Activated CD4-positive, alpha-beta memory T cell treated with anti-CD3 and anti-CD28 coated beads for 36 hours (primary cell): ENCODE measurements at regions of chr14 and their contacts with region 1.

Region 1: GRCh38 chr14:20624495-20625070 is 16.9 kb downstream of the OR6S1 start:
- DNase-seq: peak; percentile 64
- H3K4me3 Mint-ChIP-seq: peak overlapping the region; percentile 75
- H3K27ac Mint-ChIP-seq: peak overlapping the region; percentile 81
- H3K4me1 Mint-ChIP-seq: peaks cover 55% of the 10 kb centered on the region
- H3K27me3 Mint-ChIP-seq: peaks cover 45% of the 10 kb centered on the region

Region 2: GRCh38 chr14:20642182-20642581 is 17.6 kb after region 1 on chr14:
- CTCF ChIA-PET with region 1: no interaction called
- POLR2A ChIA-PET with region 1: no interaction called
- intact Hi-C with region 1: no loop called
- DNase-seq: no peak
- H3K4me3 Mint-ChIP-seq: no peak overlapping the region
- H3K27ac Mint-ChIP-seq: no peak overlapping the region
- H3K4me1 Mint-ChIP-seq: no peaks in the 10 kb centered on the region
- H3K27me3 Mint-ChIP-seq: peaks cover 9% of the 10 kb centered on the region

Region 3: GRCh38 chr14:20662968-20663732 is 38.6 kb after region 1 on chr14:
- CTCF ChIA-PET with region 1: interaction called, 3 read pairs
- POLR2A ChIA-PET with region 1: no interaction called
- intact Hi-C with region 1: loop called (anchors 2 kb)
- DNase-seq: peak; percentile 93
- H3K4me3 Mint-ChIP-seq: peak overlapping the region; percentile 74
- H3K27ac Mint-ChIP-seq: peak overlapping the region; percentile 62
- H3K4me1 Mint-ChIP-seq: peaks cover 25% of the 10 kb centered on the region
- H3K27me3 Mint-ChIP-seq: peaks cover under 1% of the 10 kb centered on the region